ENCODE measurements at regions of chr14 and their contacts with region 1.

Region 1: GRCh38 chr14:55102141-55102621 is 26.9 kb upstream of the LGALS3 start:
- DNase-seq: peak; percentile 96
- ATAC-seq: peak; percentile 77
- H3K4me3 ChIP-seq: no peak overlapping the region
- H3K27ac ChIP-seq: peak overlapping the region; percentile 96
- H3K4me1 ChIP-seq: peaks cover 17% of the 10 kb centered on the region
- H3K27me3 ChIP-seq: no peaks in the 10 kb centered on the region
- CTCF ChIP-seq: no peak
- POLR2A ChIP-seq: 0 out of 2 replicates have a peak, but pooled peaks have one; percentile 36
- RAD21 ChIP-seq: no peak

Region 2: DNA sequence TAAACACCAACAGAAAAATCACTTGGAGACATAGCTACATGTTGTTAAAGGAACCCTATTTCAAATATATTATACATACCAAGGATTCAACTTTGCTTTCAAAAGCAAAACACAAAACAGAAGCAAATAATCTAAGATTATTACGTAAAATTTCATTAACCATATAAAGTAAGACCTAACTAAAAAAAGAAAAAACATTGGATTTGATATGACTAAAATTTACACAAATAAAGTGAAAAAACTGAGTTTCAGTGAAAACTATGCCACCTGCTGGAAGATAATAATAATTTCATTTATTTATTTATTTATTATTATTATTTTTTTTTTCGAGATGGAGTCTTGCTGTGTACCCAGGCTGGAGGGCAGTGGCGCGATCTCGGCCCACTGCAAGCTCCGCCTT is 120.5 kb before region 1 on chr14:
- CTCF ChIA-PET with region 1: no interaction called
- POLR2A ChIA-PET with region 1: no interaction called
- dilution Hi-C with region 1: no loop called
- in situ Hi-C with region 1: no loop called
- intact Hi-C with region 1: no loop called
- DNase-seq: peak; percentile 22
- ATAC-seq: no peak
- H3K4me3 ChIP-seq: no peak overlapping the region
- H3K27ac ChIP-seq: no peak overlapping the region
- H3K4me1 ChIP-seq: no peaks in the 10 kb centered on the region
- H3K27me3 ChIP-seq: no peaks in the 10 kb centered on the region
- CTCF ChIP-seq: 0 out of 2 replicates have a peak, but pooled peaks have one; percentile 15
- POLR2A ChIP-seq: no peak
- RAD21 ChIP-seq: no peak

Region 3: GRCh38 chr14:55000381-55000780 is 101.8 kb before region 1 on chr14:
- CTCF ChIA-PET with region 1: no interaction called
- POLR2A ChIA-PET with region 1: no interaction called
- dilution Hi-C with region 1: no loop called
- in situ Hi-C with region 1: no loop called
- intact Hi-C with region 1: no loop called
- DNase-seq: peak; percentile 58
- ATAC-seq: no peak
- H3K4me3 ChIP-seq: no peak overlapping the region
- H3K27ac ChIP-seq: no peak overlapping the region
- H3K4me1 ChIP-seq: no peaks in the 10 kb centered on the region; the same call in 1 of the 2 replicates
- H3K27me3 ChIP-seq: no peaks in the 10 kb centered on the region
- CTCF ChIP-seq: no peak
- POLR2A ChIP-seq: no peak
- RAD21 ChIP-seq: no peak

Region 4: GRCh38 chr14:55123101-55123500 is 20.9 kb after region 1 on chr14:
- CTCF ChIA-PET with region 1: no interaction called
- POLR2A ChIA-PET with region 1: no interaction called
- dilution Hi-C with region 1: no loop called
- in situ Hi-C with region 1: no loop called
- intact Hi-C with region 1: loop called (anchors 2 kb)
- DNase-seq: peak; percentile 98
- ATAC-seq: peak; percentile 91
- H3K4me3 ChIP-seq: no peak overlapping the region
- H3K27ac ChIP-seq: no peak overlapping the region
- H3K4me1 ChIP-seq: peaks cover 16% of the 10 kb centered on the region
- H3K27me3 ChIP-seq: no peaks in the 10 kb centered on the region
- CTCF ChIP-seq: no peak
- POLR2A ChIP-seq: no peak; the same call in 1 of the 2 replicates
- RAD21 ChIP-seq: no peak

Region 5: GRCh38 chr14:55129428-55130195 is 27.4 kb after region 1 on chr14:
- CTCF ChIA-PET with region 1: no interaction called
- POLR2A ChIA-PET with region 1: interaction called, 6 read pairs
- dilution Hi-C with region 1: no loop called
- in situ Hi-C with region 1: loop called (anchors 5 kb)
- intact Hi-C with region 1: loop called (anchors 2 kb)
- DNase-seq: peak; percentile 74
- ATAC-seq: peak; percentile 72
- H3K4me3 ChIP-seq: peak overlapping the region; percentile 78
- H3K27ac ChIP-seq: peak overlapping the region; percentile 71
- H3K4me1 ChIP-seq: peaks cover 11% of the 10 kb centered on the region
- H3K27me3 ChIP-seq: no peaks in the 10 kb centered on the region
- CTCF ChIP-seq: no peak
- POLR2A ChIP-seq: peak; percentile 76
- RAD21 ChIP-seq: no peak

Region 6: DNA sequence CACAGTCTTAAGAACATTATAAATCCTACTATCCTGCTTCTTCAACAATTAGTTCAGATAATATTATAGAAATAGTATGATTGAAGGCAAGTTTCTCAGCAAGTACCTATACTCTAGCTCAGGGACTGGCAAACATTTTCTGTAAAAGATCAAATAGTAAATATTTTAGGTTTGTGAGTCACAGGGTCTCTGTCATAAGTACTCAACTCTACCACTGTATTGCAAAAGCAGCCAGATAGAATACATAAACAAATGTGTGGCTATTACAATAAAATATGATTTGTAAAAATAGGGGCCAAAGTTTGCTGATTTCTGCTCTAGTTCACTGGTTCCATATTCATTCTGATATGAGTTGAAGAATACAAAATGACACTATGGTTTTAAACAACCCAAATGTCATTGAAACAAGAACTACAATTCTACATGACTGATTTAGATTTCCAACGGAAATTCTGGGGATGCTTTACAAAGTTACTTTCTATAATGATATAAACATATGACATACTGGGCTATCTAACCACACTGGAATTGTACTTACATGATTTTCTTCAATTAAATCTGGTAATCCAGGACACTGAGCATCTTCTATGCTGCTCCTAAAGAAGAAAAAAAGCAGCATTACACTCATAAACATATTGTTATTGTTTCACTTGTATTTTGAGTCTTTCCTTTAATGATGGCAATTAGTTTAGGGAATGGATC is 50.0 kb after region 1 on chr14:
- CTCF ChIA-PET with region 1: no interaction called
- POLR2A ChIA-PET with region 1: no interaction called
- dilution Hi-C with region 1: no loop called
- in situ Hi-C with region 1: no loop called
- intact Hi-C with region 1: loop called (anchors 5 kb)
- DNase-seq: peak; percentile 81
- ATAC-seq: peak; percentile 83
- H3K4me3 ChIP-seq: no peak overlapping the region
- H3K27ac ChIP-seq: peak overlapping the region; percentile 99
- H3K4me1 ChIP-seq: peaks cover 6% of the 10 kb centered on the region; the same call in 1 of the 2 replicates
- H3K27me3 ChIP-seq: no peaks in the 10 kb centered on the region
- CTCF ChIP-seq: no peak
- POLR2A ChIP-seq: no peak
- RAD21 ChIP-seq: no peak

Region 7: DNA sequence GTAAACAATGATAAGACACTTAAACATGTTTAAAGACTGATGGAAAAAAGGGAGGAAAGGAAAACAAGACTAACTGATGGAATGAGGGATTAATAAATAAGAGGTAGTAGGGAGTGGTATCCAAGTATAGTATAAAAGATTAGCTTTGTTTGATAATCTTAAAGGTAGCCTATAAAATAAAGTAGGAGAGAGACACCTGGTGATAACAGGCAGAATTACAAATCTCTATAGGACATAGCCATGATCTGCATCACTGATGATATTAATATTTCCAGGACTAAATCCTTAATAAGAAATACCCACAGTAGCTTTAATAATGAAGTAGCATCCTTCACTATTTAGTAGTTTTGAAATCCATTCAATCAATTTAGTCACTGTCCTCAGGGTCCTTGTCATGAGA is 58.8 kb after region 1 on chr14:
- CTCF ChIA-PET with region 1: interaction called, 3 read pairs
- POLR2A ChIA-PET with region 1: interaction called, 12 read pairs
- dilution Hi-C with region 1: no loop called
- in situ Hi-C with region 1: no loop called
- intact Hi-C with region 1: no loop called
- DNase-seq: peak; percentile 54
- ATAC-seq: peak; percentile 89
- H3K4me3 ChIP-seq: no peak overlapping the region
- H3K27ac ChIP-seq: no peak overlapping the region
- H3K4me1 ChIP-seq: no peaks in the 10 kb centered on the region
- H3K27me3 ChIP-seq: no peaks in the 10 kb centered on the region
- CTCF ChIP-seq: peak; percentile 67
- POLR2A ChIP-seq: no peak
- RAD21 ChIP-seq: peak; percentile 68